ENCODE measurements at regions of chr3 and their contacts with region 1.

Region 1: GRCh38 chr3:16600780-16601539 is 4.3 kb downstream of the DAZL start:
- DNase-seq: peak; percentile 44 to 92 (median 77)
- ATAC-seq: peak in 3 of 4 experiments; percentile 43 to 61 (median 56)
- H3K4me3 ChIP-seq: no peak overlapping the region
- H3K4me3 Mint-ChIP-seq: no peak overlapping the region
- H3K27ac ChIP-seq: no peak overlapping the region
- H3K27ac Mint-ChIP-seq: no peak overlapping the region
- H3K4me1 ChIP-seq: peaks cover 0 to 2% of the 10 kb centered on the region in 2 experiments
- H3K4me1 Mint-ChIP-seq: peaks cover 12 to 20% (median 19%) of the 10 kb centered on the region in 3 donors
- H3K27me3 ChIP-seq: no peaks in the 10 kb centered on the region
- H3K27me3 Mint-ChIP-seq: no peaks in the 10 kb centered on the region

Region 2: DNA sequence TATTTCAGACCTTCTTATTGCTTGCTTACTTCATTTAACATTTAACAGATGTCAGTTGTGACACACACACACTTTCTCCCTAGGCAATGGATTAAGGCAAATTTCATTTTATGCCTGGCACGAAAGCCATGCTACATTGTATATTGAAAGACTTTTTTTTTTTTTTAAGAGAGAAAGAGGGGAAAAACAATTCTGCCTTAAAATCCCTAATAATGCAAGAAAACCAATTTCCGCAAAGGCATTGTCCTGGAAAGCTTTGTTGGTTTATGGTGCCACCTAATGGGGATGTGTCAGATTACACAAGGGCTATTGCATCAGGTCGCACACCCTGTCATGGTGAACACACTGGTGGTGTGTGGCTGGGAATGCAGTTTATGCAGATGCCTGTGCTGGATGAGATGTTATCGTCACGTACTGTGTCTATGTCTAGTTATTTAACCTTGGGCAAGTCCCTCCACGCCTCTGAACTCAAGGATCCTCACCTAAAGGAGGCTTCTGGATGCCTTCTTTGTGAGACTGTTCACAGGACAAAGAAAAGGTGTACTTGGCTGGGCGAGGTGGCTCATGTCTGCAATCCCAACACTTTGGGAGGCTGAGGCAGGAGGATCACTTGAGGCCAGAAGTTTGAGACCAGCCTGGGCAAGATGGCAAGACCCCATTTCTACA is 50.2 kb before region 1 on chr3:
- CTCF ChIA-PET with region 1: no interaction called
- POLR2A ChIA-PET with region 1: no interaction called
- DNase-seq: peak; percentile 32 to 90 (median 66)
- ATAC-seq: peak; percentile 93 to 99 (median 98)
- H3K4me3 ChIP-seq: no peak overlapping the region
- H3K4me3 Mint-ChIP-seq: no peak overlapping the region
- H3K27ac ChIP-seq: no peak overlapping the region
- H3K27ac Mint-ChIP-seq: peak overlapping the region; percentile 61 to 66
- H3K4me1 ChIP-seq: peaks cover 2% of the 10 kb centered on the region in 2 experiments
- H3K4me1 Mint-ChIP-seq: peaks cover 6 to 9% (median 6%) of the 10 kb centered on the region in 3 donors
- H3K27me3 ChIP-seq: peaks cover 0 to 4% of the 10 kb centered on the region in 2 experiments
- H3K27me3 Mint-ChIP-seq: peaks cover 3 to 9% of the 10 kb centered on the region in 2 donors

Region 3: GRCh38 chr3:16801698-16802097 is 200.7 kb after region 1 on chr3:
- CTCF ChIA-PET with region 1: no interaction called
- POLR2A ChIA-PET with region 1: no interaction called
- DNase-seq: peak in 1 of 35 experiments; percentile 33
- ATAC-seq: peak in 2 of 4 experiments; percentile 23 to 64
- H3K4me3 ChIP-seq: no peak overlapping the region
- H3K4me3 Mint-ChIP-seq: no peak overlapping the region
- H3K27ac ChIP-seq: no peak overlapping the region
- H3K27ac Mint-ChIP-seq: peak overlapping the region; percentile 43 to 45
- H3K4me1 ChIP-seq: peaks cover 3 to 14% of the 10 kb centered on the region in 2 experiments
- H3K4me1 Mint-ChIP-seq: peaks cover 30 to 43% (median 42%) of the 10 kb centered on the region in 3 donors
- H3K27me3 ChIP-seq: no peaks in the 10 kb centered on the region
- H3K27me3 Mint-ChIP-seq: no peaks in the 10 kb centered on the region

Region 4: DNA sequence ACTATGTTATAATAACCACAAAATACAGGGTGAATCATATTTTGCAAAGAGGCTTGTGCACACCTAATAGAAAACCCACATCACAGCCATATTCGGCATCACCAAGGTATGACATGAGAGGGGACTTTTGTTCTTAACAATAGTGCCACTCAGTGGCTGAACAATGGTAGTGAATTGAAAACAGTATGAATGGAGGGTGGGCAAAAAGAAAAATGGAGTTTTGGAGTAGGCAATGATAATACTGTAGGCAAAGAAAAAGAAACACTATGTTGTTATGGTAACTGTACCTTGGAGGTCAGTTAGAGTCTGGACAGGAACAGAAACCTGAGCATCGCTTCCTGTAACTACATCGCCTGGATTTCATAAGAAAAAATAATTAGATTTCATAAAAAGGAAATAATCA is 632.4 kb after region 1 on chr3:
- CTCF ChIA-PET with region 1: interaction called, 8 to 15 read pairs
- POLR2A ChIA-PET with region 1: no interaction called
- DNase-seq: peak in 29 of 35 experiments; percentile 1 to 76 (median 22)
- ATAC-seq: peak; percentile 91 to 98 (median 92)
- H3K4me3 ChIP-seq: no peak overlapping the region
- H3K4me3 Mint-ChIP-seq: no peak overlapping the region
- H3K27ac ChIP-seq: no peak overlapping the region
- H3K27ac Mint-ChIP-seq: peak overlapping the region; percentile 19 to 45
- H3K4me1 ChIP-seq: peaks cover 0 to 25% of the 10 kb centered on the region in 2 experiments
- H3K4me1 Mint-ChIP-seq: peaks cover 26 to 30% (median 28%) of the 10 kb centered on the region in 3 donors
- H3K27me3 ChIP-seq: no peaks in the 10 kb centered on the region
- H3K27me3 Mint-ChIP-seq: no peaks in the 10 kb centered on the region

Region 5: GRCh38 chr3:17412950-17413530 is 812.1 kb after region 1 on chr3:
- CTCF ChIA-PET with region 1: interaction called, 7 to 24 read pairs
- POLR2A ChIA-PET with region 1: no interaction called
- DNase-seq: peak in 5 of 35 experiments; percentile 4 to 69 (median 7)
- ATAC-seq: peak in 3 of 4 experiments; percentile 38 to 57 (median 40)
- H3K4me3 ChIP-seq: no peak overlapping the region
- H3K4me3 Mint-ChIP-seq: no peak overlapping the region
- H3K27ac ChIP-seq: no peak overlapping the region
- H3K27ac Mint-ChIP-seq: no peak overlapping the region
- H3K4me1 ChIP-seq: no peaks in the 10 kb centered on the region
- H3K4me1 Mint-ChIP-seq: peaks cover 0 to 1% (median 0%) of the 10 kb centered on the region in 3 donors
- H3K27me3 ChIP-seq: no peaks in the 10 kb centered on the region
- H3K27me3 Mint-ChIP-seq: no peaks in the 10 kb centered on the region